Activated CD4-positive, alpha-beta memory T cell treated with anti-CD3 and anti-CD28 coated beads for 36 hours (primary cell): ENCODE measurements at regions of chr4 and their contacts with region 1.

Region 1: GRCh38 chr4:135371137-135371536 is 1169.5 kb upstream of the PABPC4L start:
- DNase-seq: peak; percentile 10
- H3K4me3 Mint-ChIP-seq: no peak overlapping the region
- H3K27ac Mint-ChIP-seq: no peak overlapping the region
- H3K4me1 Mint-ChIP-seq: no peaks in the 10 kb centered on the region
- H3K27me3 Mint-ChIP-seq: no peaks in the 10 kb centered on the region

Region 2: GRCh38 chr4:134132079-134132764 is 1238.9 kb before region 1 on chr4:
- CTCF ChIA-PET with region 1: no interaction called
- POLR2A ChIA-PET with region 1: no interaction called
- intact Hi-C with region 1: no loop called
- DNase-seq: no peak
- H3K4me3 Mint-ChIP-seq: no peak overlapping the region
- H3K27ac Mint-ChIP-seq: no peak overlapping the region
- H3K4me1 Mint-ChIP-seq: no peaks in the 10 kb centered on the region
- H3K27me3 Mint-ChIP-seq: no peaks in the 10 kb centered on the region

Region 3: GRCh38 chr4:135385830-135386581 is 14.9 kb after region 1 on chr4:
- CTCF ChIA-PET with region 1: no interaction called
- POLR2A ChIA-PET with region 1: no interaction called
- intact Hi-C with region 1: no loop called
- DNase-seq: no peak
- H3K4me3 Mint-ChIP-seq: no peak overlapping the region
- H3K27ac Mint-ChIP-seq: no peak overlapping the region
- H3K4me1 Mint-ChIP-seq: no peaks in the 10 kb centered on the region
- H3K27me3 Mint-ChIP-seq: no peaks in the 10 kb centered on the region

Region 4: DNA sequence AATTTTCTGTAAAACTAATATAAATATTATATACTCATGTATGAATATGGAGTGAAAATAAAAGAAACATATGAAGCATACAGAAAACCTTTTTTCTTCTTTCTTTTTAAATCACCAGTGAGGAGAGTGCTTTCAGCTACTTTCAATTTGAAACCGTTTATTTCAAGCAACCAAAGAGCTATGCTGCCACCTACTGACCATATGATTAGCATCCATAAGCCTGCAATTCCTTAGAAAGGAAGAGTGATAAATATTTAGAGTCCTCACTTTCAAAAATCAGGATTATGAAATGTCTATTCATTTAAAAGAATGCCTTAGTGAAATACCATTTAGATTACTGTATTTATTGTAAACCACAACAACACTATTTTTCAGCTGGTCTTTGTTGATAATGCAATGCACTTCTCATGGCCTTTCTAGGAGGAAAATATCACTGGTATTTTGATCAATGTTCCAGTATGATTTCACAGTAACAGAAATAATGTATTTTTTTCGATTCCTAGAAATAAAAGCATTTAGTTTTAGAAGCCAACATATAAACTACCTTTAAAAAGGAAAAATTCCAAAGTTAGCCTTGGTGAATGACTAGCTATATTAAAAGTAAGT is 1493.5 kb after region 1 on chr4:
- CTCF ChIA-PET with region 1: interaction called, 4 read pairs
- POLR2A ChIA-PET with region 1: no interaction called
- intact Hi-C with region 1: loop called (anchors 10 kb)
- DNase-seq: no peak
- H3K4me3 Mint-ChIP-seq: no peak overlapping the region
- H3K27ac Mint-ChIP-seq: no peak overlapping the region
- H3K4me1 Mint-ChIP-seq: no peaks in the 10 kb centered on the region
- H3K27me3 Mint-ChIP-seq: no peaks in the 10 kb centered on the region